Calu3 (cell line): ENCODE measurements at regions of chr2 and their contacts with region 1.

Region 1: GRCh38 chr2:60550178-60550983 is 3.1 kb downstream of the BCL11A start:
- DNase-seq: peak; percentile 73
- H3K4me3 Mint-ChIP-seq: peak overlapping the region; percentile 83
- H3K27ac Mint-ChIP-seq: no peak overlapping the region
- H3K4me1 Mint-ChIP-seq: peaks cover 18% of the 10 kb centered on the region
- H3K27me3 Mint-ChIP-seq: peaks cover 87% of the 10 kb centered on the region
- CTCF ChIP-seq: peak; percentile 47

Region 2: GRCh38 chr2:59025157-59025757 is 1525.1 kb before region 1 on chr2:
- CTCF ChIA-PET with region 1: no interaction called
- intact Hi-C with region 1: loop called (anchors 5 kb)
- DNase-seq: peak; percentile 52
- H3K4me3 Mint-ChIP-seq: no peak overlapping the region
- H3K27ac Mint-ChIP-seq: no peak overlapping the region
- H3K4me1 Mint-ChIP-seq: no peaks in the 10 kb centered on the region
- H3K27me3 Mint-ChIP-seq: peaks cover 21% of the 10 kb centered on the region
- CTCF ChIP-seq: peak; percentile 74

Region 3: DNA sequence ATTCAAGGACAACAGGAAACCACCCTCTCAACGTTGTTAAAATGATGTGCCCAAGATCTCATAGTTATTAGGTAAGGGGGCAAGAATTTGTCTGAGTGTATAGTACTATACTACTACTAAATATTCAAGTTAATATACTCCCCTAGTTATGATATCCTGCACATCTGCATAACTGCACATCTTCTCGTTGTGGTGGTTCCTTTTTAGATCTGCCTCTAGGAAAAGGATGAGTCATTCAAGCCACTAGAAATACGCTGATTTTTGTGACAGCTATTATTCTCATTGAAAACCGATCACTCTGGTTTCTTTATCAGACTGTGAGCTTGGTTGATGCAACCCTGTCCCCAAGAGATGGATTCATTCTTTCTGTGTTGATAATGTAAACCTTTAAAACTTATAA is 1242.3 kb before region 1 on chr2:
- CTCF ChIA-PET with region 1: no interaction called
- intact Hi-C with region 1: loop called (anchors 2 kb)
- DNase-seq: no peak
- H3K4me3 Mint-ChIP-seq: no peak overlapping the region
- H3K27ac Mint-ChIP-seq: no peak overlapping the region
- H3K4me1 Mint-ChIP-seq: no peaks in the 10 kb centered on the region
- H3K27me3 Mint-ChIP-seq: no peaks in the 10 kb centered on the region
- CTCF ChIP-seq: no peak

Region 4: DNA sequence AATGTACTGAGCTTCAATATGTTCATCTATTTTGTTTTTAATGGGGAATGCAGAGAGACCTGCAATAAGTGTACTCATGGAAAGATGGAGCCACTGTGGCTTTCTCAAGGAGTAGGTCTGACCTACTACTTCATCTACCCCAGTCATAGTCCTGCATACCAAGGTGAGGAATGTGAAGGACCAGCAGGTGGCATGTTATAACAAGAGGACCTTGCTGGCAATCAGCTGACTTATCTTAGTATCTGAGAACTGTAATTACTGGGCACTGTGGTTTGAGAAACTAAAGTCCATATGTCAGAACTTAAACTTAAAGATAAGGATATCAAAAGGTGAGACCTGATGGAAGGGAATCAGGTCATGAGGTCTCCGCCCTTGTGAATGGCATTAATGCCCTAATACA is 1101.1 kb before region 1 on chr2:
- CTCF ChIA-PET with region 1: no interaction called
- intact Hi-C with region 1: loop called (anchors 2 kb)
- DNase-seq: peak; percentile 16
- H3K4me3 Mint-ChIP-seq: no peak overlapping the region
- H3K27ac Mint-ChIP-seq: no peak overlapping the region
- H3K4me1 Mint-ChIP-seq: no peaks in the 10 kb centered on the region
- H3K27me3 Mint-ChIP-seq: no peaks in the 10 kb centered on the region
- CTCF ChIP-seq: no peak

Region 5: GRCh38 chr2:59684116-59684770 is 866.1 kb before region 1 on chr2:
- CTCF ChIA-PET with region 1: no interaction called
- intact Hi-C with region 1: loop called (anchors 10 kb)
- DNase-seq: peak; percentile 48
- H3K4me3 Mint-ChIP-seq: no peak overlapping the region
- H3K27ac Mint-ChIP-seq: peak overlapping the region; percentile 70
- H3K4me1 Mint-ChIP-seq: peaks cover 33% of the 10 kb centered on the region
- H3K27me3 Mint-ChIP-seq: no peaks in the 10 kb centered on the region
- CTCF ChIP-seq: no peak

Region 6: GRCh38 chr2:60498816-60499429 is 51.5 kb before region 1 on chr2:
- CTCF ChIA-PET with region 1: interaction called, 6 read pairs
- intact Hi-C with region 1: loop called (anchors 5 kb)
- DNase-seq: no peak
- H3K4me3 Mint-ChIP-seq: no peak overlapping the region
- H3K27ac Mint-ChIP-seq: no peak overlapping the region
- H3K4me1 Mint-ChIP-seq: no peaks in the 10 kb centered on the region
- H3K27me3 Mint-ChIP-seq: peaks cover 7% of the 10 kb centered on the region
- CTCF ChIP-seq: no peak